ENCODE measurements at regions of chr11 and their contacts with region 1.

Region 1: GRCh38 chr11:61187505-61188130 is 15.7 kb upstream of the PGA3 start:
- DNase-seq: no peak
- H3K4me3 ChIP-seq: no peak overlapping the region
- H3K27ac ChIP-seq: no peak overlapping the region
- H3K4me1 ChIP-seq: no peaks in the 10 kb centered on the region
- H3K27me3 ChIP-seq: no peaks in the 10 kb centered on the region
- CTCF ChIP-seq: peak; percentile 58 to 85 (median 67)
- POLR2A ChIP-seq: no peak

Region 2: DNA sequence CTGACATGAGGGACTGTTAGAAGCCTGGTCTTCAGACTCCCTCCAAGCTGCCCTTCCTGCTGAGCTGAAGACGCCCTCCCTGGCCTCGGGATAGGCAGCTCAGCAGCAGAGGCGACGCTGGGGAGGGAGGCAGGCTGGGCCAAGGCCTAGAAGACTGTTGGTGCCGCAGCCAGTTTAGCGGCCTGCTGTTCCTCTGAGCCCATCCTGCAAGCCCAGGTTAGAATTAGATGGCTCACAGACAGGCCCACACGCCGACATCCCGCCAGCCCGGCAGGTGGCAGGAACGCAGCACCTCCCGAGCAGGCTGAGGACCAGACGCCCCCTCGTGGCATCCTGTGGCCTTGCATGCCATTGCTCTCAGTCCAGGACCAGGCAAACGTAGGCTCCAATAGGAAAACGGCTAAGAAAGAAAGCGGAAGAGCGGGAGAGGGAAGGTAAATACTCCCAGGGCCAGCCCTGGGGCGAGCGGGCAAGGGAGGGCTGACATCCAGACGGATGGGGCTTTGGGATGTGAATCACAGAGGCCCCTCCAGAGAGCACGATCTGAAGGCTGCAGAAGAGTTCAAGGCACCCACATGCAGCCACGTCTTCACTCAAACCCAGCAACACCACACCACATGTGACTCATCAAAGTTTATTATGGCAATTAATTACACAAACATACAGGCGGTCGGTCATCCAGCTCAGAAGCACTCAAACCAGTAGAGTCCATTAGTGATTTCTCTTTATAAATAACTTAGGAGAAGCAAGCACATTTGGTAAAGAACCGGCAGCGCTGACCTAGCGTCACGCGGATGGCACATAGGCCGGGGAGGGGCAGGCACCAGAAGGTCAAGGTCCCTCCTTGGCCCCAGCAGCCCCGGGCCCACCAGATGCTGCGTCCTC is 57.7 kb before region 1 on chr11:
- intact Hi-C with region 1: loop called (anchors 10 kb)
- DNase-seq: no peak
- H3K4me3 ChIP-seq: peak overlapping the region; percentile 18 to 30
- H3K27ac ChIP-seq: peak overlapping the region; percentile 64
- H3K4me1 ChIP-seq: peaks cover 33% of the 10 kb centered on the region
- H3K27me3 ChIP-seq: no peaks in the 10 kb centered on the region
- CTCF ChIP-seq: peak; percentile 96 to 97 (median 96)
- POLR2A ChIP-seq: no peak

Measured in vagina (tissue), 2 donors.